ENCODE measurements at regions of chr2 and their contacts with region 1.

Region 1: DNA sequence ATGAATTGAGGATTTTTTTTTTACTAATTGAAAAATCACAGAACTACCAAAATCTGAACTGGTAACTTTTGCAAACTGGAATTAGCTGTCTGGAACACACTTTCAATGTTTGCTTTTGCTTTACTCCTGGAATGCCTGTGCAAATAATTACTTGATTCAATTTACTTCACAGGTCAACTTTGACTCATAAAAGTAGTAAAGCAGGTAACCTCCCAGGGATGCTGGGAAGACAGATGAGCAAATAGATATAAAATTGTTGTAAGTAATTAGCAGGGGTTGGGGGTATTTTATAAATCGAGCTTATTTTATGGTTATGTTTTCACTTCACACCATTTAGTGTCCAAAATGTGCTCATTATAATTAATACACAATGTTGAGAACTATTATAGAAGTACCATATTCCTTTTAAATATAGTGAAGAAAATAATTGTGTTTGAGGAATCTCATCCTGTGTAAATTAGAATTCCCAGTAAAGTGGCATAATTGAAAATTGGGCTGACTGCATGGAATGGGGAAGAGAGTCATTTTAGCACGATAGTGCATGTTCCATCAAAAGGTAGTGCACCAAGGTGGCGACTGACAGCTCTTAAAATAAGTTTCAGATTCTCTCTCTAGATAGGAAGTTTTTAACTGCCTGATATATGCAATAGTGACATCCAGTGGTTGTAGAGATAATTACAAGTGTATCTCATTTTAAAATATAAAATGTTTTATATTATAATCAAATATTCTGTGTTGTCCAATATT is 398.1 kb upstream of the HNRNPA3 start:
- DNase-seq: no peak
- H3K4me3 ChIP-seq: no peak overlapping the region
- H3K27ac ChIP-seq: peak overlapping the region in 1 of 2 donors; percentile 50
- H3K4me1 ChIP-seq: peaks cover 0 to 5% of the 10 kb centered on the region in 2 donors
- H3K27me3 ChIP-seq: no peaks in the 10 kb centered on the region
- CTCF ChIP-seq: peak; percentile 49 to 85 (median 66)
- POLR2A ChIP-seq: no peak

Region 2: GRCh38 chr2:176126929-176127773 is 687.3 kb before region 1 on chr2:
- intact Hi-C with region 1: loop called (anchors 10 kb)
- DNase-seq: peak; percentile 81 to 88
- H3K4me3 ChIP-seq: peak overlapping the region; percentile 15 to 16
- H3K27ac ChIP-seq: peak overlapping the region; percentile 98 to 99
- H3K4me1 ChIP-seq: no peaks in the 10 kb centered on the region
- H3K27me3 ChIP-seq: no peaks in the 10 kb centered on the region
- CTCF ChIP-seq: peak; percentile 84 to 95 (median 89)
- POLR2A ChIP-seq: peak; percentile 19 to 30

Region 3: DNA sequence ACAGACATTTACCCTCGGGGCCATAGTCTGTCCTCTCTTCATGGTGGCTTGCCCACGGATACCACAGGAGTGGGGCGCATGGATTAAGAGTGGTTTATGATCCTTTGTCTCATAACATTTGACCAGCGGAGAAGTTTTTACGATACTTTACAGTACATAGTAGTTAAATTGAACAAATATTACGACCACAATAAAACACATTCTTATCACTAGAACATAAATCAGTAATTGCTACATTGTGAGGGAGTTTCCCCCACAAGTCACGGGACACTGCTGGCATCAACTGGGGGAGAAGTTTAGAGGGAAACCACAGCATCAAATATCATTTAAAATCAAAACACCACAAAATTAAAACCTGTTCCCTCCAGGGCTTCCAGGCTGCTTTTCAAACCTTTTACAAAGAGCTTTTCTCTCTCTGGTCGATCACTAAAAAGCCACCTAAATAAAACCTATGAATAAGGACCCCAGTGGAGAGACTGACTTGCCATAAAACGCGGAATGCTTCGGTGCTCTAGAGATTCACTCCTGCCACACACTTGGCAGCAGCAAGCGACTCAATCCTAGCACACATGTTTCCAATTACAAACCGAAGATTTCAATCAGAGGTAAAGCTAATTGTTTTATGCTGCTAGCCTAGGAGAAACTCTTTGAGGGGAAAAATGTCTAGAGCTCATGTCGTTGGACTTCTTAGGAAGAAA is 224.5 kb after region 1 on chr2:
- intact Hi-C with region 1: no loop called
- DNase-seq: no peak
- H3K4me3 ChIP-seq: peak overlapping the region in 1 of 2 donors; percentile 9
- H3K27ac ChIP-seq: peak overlapping the region; percentile 54 to 58
- H3K4me1 ChIP-seq: peaks cover 0 to 7% of the 10 kb centered on the region in 2 donors
- H3K27me3 ChIP-seq: no peaks in the 10 kb centered on the region
- CTCF ChIP-seq: no peak
- POLR2A ChIP-seq: no peak

Region 4: DNA sequence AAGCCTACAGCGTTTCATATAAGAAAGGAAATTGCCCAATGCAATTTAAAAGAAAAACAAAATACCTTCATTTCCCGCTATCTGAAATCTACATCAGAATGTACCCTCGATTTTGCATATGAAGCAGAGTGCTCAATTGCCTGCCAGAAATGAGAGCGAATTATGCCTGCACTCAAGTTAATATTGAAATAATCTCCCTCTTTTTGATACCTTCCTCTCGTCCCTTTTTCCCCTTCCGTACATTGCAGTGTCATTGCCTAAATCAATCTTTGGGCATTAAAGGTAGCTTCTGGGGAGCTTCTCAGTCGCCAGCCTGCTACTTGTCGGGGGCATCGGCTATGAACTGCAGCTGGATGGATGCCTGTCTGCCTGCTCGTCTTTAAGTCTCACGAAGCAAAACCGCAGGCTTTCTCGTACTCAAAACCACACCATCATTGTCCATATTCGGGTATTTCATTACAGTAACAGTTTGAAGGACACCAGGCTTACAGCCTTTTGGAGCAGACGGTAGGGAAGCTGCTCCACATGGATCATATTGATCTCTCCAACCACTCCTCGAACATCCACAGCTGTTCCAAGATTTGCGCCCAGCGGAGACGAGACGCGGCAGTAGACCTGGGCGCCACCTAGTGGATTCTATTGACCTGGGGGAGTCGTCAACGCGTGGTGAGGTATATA is 334.1 kb after region 1 on chr2:
- intact Hi-C with region 1: loop called (anchors 10 kb)
- DNase-seq: peak; percentile 76 to 83
- H3K4me3 ChIP-seq: peak overlapping the region; percentile 41 to 42
- H3K27ac ChIP-seq: peak overlapping the region; percentile 65 to 88
- H3K4me1 ChIP-seq: peaks cover 0 to 3% of the 10 kb centered on the region in 2 donors
- H3K27me3 ChIP-seq: no peaks in the 10 kb centered on the region
- CTCF ChIP-seq: peak; percentile 78 to 93 (median 82)
- POLR2A ChIP-seq: peak in 1 of 2 donors; percentile 54

Region 5: DNA sequence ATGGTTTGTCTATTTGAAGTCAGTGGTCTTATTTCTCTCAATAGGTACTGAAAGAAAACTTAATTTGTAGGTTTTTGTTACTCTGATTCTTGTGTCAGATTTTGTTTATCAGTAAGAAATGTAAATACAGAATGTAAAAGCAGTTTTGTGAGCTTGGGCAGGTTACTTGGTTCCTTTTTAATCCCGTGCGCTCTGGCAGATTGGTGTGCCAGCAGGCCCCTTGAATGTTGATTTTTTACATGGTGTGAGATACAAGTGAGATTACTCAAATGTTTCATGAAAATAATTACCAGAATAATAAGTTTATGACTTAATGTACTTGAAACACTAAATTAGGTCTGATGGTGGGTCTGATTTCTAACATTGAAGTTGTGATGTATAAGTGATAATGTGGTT is 411.5 kb after region 1 on chr2:
- intact Hi-C with region 1: no loop called
- DNase-seq: no peak
- H3K4me3 ChIP-seq: no peak overlapping the region
- H3K27ac ChIP-seq: no peak overlapping the region
- H3K4me1 ChIP-seq: no peaks in the 10 kb centered on the region
- H3K27me3 ChIP-seq: no peaks in the 10 kb centered on the region
- CTCF ChIP-seq: no peak
- POLR2A ChIP-seq: no peak

Measured in uterus (tissue), 4 donors.